HCT116 (cell line): ENCODE measurements at regions of chr4 and their contacts with region 1.

Region 1: GRCh38 chr4:109406338-109406931 is 27.2 kb upstream of the SEC24B start:
- DNase-seq: peak; percentile 59
- ATAC-seq: peak; percentile 88
- H3K4me3 ChIP-seq: no peak overlapping the region
- H3K27ac ChIP-seq: no peak overlapping the region
- H3K4me1 ChIP-seq: peaks cover 0 to 7% of the 10 kb centered on the region in 2 experiments; a peak in 1 of 4 replicates
- H3K27me3 ChIP-seq: no peaks in the 10 kb centered on the region; the same call in 1 of the 2 replicates
- CTCF ChIP-seq: peak; percentile 46 to 82 (median 68); a peak in 5 of 6 replicates
- POLR2A ChIP-seq: no peak
- RAD21 ChIP-seq: peak; percentile 76

Region 2: GRCh38 chr4:108060164-108060563 is 1346.3 kb before region 1 on chr4:
- CTCF ChIA-PET with region 1: no interaction called
- POLR2A ChIA-PET with region 1: no interaction called
- RAD21 ChIA-PET with region 1: no interaction called
- intact Hi-C with region 1: loop called (anchors 10 kb)
- DNase-seq: peak; percentile 41
- ATAC-seq: peak; percentile 66
- H3K4me3 ChIP-seq: no peak overlapping the region
- H3K27ac ChIP-seq: no peak overlapping the region
- H3K4me1 ChIP-seq: peaks cover 0 to 22% of the 10 kb centered on the region in 2 experiments; a peak in 2 of 4 replicates
- H3K27me3 ChIP-seq: no peaks in the 10 kb centered on the region
- CTCF ChIP-seq: peak; percentile 32 to 57 (median 42); a peak in 4 of 6 replicates
- POLR2A ChIP-seq: no peak
- RAD21 ChIP-seq: peak; percentile 82

Region 3: GRCh38 chr4:108581083-108581482 is 825.4 kb before region 1 on chr4:
- CTCF ChIA-PET with region 1: no interaction called
- POLR2A ChIA-PET with region 1: no interaction called
- RAD21 ChIA-PET with region 1: no interaction called
- intact Hi-C with region 1: no loop called
- DNase-seq: no peak
- ATAC-seq: no peak
- H3K4me3 ChIP-seq: no peak overlapping the region
- H3K27ac ChIP-seq: no peak overlapping the region
- H3K4me1 ChIP-seq: no peaks in the 10 kb centered on the region
- H3K27me3 ChIP-seq: no peaks in the 10 kb centered on the region
- CTCF ChIP-seq: no peak
- POLR2A ChIP-seq: no peak
- RAD21 ChIP-seq: no peak

Region 4: GRCh38 chr4:108683479-108683878 is 723.0 kb before region 1 on chr4:
- CTCF ChIA-PET with region 1: interaction called, 5 read pairs
- POLR2A ChIA-PET with region 1: no interaction called
- RAD21 ChIA-PET with region 1: no interaction called
- intact Hi-C with region 1: loop called (anchors 2 kb)
- DNase-seq: peak; percentile 15
- ATAC-seq: peak; percentile 71; the same call in 1 of the 2 replicates
- H3K4me3 ChIP-seq: no peak overlapping the region
- H3K27ac ChIP-seq: no peak overlapping the region
- H3K4me1 ChIP-seq: no peaks in the 10 kb centered on the region; a peak in 1 of 4 replicates
- H3K27me3 ChIP-seq: no peaks in the 10 kb centered on the region
- CTCF ChIP-seq: peak; percentile 38 to 57 (median 48); a peak in 5 of 6 replicates
- POLR2A ChIP-seq: no peak
- RAD21 ChIP-seq: peak; percentile 53

Region 5: DNA sequence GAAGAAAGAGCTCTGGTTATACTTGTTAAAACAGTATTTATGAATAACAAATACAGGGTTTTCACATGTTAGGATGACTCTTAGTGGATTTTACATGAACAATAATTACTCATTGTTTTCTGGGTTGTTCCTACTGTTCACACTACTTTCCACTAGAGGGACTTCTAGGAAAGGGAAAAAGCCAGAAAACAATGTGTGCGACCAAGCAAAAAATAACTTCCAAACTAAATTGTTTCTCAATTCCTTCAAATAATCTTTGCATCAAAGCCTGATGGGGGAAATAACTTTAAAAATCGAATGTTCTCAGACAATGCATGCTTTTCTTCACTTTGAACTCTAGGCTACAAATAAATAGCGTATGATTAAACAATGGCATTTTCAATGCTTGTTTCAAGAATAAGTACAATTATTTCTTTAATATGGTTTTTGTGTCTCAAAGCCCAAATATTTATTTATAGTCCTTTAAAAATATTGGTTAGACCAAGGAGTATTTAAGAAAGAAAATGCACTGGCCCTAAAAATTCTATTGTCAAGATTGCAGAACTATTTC is 571.5 kb before region 1 on chr4:
- CTCF ChIA-PET with region 1: no interaction called
- POLR2A ChIA-PET with region 1: no interaction called
- RAD21 ChIA-PET with region 1: no interaction called
- intact Hi-C with region 1: loop called (anchors 2 kb)
- DNase-seq: peak; percentile 4
- ATAC-seq: peak; percentile 79
- H3K4me3 ChIP-seq: no peak overlapping the region
- H3K27ac ChIP-seq: no peak overlapping the region
- H3K4me1 ChIP-seq: no peaks in the 10 kb centered on the region
- H3K27me3 ChIP-seq: peaks cover 34% of the 10 kb centered on the region
- CTCF ChIP-seq: peak; percentile 59 to 74 (median 62); a peak in 5 of 6 replicates
- POLR2A ChIP-seq: no peak
- RAD21 ChIP-seq: peak; percentile 81

Region 6: DNA sequence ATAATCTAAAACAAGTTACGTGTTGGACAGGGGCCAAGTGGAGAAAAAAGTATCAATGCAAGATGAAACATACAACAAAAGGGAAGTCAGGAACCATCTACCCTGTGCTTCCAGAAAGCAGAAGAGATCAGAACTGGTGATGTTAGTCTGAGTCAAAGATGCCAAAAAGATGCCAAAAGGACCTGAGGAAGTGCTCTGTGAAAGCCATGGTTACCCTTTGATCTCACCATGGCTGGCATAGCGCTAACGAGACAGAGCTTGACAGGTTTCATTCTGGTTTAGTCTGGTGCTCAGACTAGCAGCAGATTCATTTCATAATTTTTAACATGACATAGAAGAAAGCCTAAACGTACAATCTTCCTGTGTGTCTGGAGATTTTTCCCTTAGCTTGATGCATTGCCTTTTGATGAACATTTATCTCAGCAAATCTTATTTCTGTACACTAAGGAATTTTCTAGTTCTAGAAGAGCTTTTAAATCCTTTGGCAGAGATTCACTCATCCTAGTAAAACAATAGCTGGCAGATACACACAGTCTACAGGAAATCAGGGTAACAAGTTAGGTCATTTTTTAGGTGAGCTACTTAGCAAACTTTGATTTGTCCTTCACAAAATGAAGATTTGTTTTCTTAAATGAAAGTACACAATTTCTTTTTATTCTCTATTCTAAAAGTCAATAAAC is 191.7 kb before region 1 on chr4:
- CTCF ChIA-PET with region 1: no interaction called
- POLR2A ChIA-PET with region 1: no interaction called
- RAD21 ChIA-PET with region 1: no interaction called
- intact Hi-C with region 1: no loop called
- DNase-seq: no peak
- ATAC-seq: no peak
- H3K4me3 ChIP-seq: no peak overlapping the region
- H3K27ac ChIP-seq: no peak overlapping the region
- H3K4me1 ChIP-seq: no peaks in the 10 kb centered on the region
- H3K27me3 ChIP-seq: peaks cover 35% of the 10 kb centered on the region
- CTCF ChIP-seq: no peak
- POLR2A ChIP-seq: no peak
- RAD21 ChIP-seq: no peak